Activated B cell treated with CpG ODN at 0.5 μM for 24 hours (primary cell): ENCODE measurements at regions of chr1 and their contacts with region 1.

Region 1: DNA sequence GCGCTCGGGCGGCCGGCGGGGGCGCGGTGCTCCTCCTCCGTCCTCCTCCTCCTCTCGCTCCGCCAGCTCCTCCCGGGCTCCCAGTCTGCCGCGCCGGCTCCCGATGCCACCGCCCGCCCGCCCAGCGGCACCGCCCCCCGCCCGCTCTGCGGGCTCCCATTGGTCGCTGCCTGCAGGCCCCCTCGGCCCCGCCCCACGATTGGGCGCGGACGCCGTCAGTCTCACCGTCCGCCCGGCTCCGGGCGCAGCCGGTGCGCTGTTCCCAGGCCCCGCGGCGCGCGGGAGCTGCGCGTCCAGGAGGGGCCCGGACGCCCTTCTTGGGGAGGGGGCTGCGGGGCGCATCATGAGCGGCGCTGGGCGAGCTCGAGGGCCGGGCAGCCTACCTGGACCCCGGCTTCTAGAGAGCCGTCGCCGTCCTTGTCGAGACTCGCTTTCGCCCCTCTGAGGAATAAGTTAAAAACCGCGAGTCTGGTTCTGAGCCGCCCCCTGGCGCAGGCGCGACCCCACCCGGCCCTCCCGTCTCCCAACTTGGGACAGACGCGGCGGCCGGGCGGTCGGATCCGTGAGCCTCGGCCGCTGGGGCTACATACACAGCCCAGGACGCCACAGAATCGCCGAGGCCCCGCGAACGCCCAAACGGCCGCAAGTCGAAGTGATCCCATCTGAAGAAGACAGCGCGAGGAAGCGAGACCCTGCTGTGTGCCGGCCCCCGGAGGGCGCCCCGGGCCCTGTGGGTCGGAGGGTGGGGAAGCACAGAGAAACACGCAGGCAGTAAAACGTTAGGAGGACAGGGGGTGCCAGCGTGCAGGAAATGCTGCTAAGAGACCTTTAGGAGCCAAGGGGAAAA is at the start of gene SIPA1L2:
- DNase-seq: peak; percentile 84
- ATAC-seq: peak; percentile 98
- H3K4me3 Mint-ChIP-seq: peak within 1 kb of the TSS; percentile 83
- H3K27ac Mint-ChIP-seq: no peak within 1 kb of the TSS
- H3K4me1 Mint-ChIP-seq: peaks cover 10% of the 10 kb centered on the region
- H3K27me3 Mint-ChIP-seq: peaks cover 42% of the 10 kb centered on the region
- CTCF ChIP-seq: no peak
- total RNA-seq, gene SIPA1L2: 0.13 and 0.20 TPM in 2 replicates

Region 2: DNA sequence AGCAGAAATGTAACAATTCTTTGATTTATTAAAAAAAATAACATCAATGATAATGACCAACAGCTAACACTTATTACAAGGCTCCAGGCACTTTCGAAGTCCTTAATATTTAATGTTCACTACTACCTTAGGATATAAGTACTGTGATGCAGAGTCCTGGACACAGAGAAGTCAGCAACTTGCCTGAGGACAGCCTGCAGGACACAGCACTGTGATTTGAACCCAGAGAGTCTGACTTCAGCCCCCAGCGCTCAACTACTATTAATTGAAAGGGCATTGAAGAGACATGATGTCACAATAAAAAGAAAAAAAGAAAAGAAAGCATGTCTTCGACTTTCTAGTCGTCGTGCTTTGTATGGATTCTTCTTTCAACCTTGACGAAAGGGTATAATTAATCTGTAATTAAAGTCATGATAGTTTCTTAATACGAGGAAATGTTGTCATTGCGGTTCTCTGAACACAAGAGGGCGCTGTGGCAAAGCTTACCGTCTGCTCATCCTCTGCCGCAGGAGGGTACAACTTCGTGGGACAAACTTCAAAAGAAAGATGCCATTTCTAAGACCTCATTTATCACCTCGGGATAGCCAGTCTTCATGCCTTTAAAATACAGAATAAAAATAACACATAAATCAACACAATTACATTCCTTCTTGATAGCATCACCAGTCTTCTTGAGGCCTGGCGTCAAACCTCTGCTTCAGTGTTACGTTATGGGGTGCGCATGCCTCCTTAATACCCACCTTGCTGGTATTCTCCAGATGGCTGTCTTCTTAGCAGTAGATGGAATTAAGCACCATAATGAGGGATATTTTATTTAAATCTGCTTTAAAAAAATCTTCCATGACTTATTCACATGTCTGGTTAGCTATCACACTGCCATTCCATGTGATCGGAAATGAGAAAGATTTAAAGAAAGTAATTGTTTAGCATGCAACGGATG is 763.6 kb before region 1 on chr1:
- CTCF ChIA-PET with region 1: no interaction called
- POLR2A ChIA-PET with region 1: no interaction called
- intact Hi-C with region 1: loop called (anchors 5 kb)
- DNase-seq: no peak
- ATAC-seq: no peak
- H3K4me3 Mint-ChIP-seq: no peak overlapping the region
- H3K27ac Mint-ChIP-seq: no peak overlapping the region
- H3K4me1 Mint-ChIP-seq: peaks cover 20% of the 10 kb centered on the region
- H3K27me3 Mint-ChIP-seq: no peaks in the 10 kb centered on the region
- CTCF ChIP-seq: peak; percentile 55

Region 3: DNA sequence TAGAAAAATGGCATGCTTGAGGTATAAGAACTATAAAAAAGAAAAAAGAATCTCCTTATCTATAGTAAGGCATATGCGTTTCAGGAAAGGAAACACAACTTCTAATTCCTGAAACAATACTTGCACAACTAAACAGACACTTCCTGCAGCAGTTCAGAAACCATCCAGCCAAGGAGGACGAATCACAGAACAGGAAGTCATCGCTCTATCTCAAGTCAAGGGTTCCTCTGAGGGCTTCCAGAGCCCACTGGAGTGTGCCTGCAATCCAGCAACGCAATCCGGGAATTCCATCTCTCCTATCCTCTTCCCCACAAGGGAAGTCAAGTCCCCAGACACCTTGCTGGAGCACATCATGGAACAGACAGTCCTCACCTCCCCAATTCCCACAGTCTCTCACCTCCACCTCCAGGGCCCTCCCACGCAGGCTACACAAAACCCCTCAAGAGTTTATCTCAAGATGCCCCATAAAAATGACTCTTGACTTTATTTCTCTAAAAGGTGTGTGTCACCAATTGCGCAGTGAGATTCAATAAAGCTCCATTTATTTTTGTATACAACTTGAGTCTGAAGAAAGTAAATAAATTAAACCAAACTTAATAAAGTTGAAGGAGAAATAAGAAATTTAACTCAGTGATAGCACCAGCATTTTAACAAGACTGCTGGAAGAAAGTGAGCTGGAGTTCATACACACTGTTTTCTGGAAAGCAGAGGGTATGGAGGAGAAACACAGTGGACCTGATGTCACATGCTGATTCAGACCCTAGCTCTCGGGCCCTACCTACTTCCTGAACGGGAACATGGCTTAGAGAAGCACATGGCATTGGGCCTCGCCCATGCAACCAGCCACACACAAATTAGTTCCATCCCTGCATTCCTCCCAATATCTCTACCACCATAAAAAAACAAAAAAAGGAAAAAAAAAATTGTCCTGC is 40.2 kb before region 1 on chr1:
- CTCF ChIA-PET with region 1: no interaction called
- POLR2A ChIA-PET with region 1: no interaction called
- intact Hi-C with region 1: loop called (anchors 2 kb)
- DNase-seq: no peak
- ATAC-seq: no peak
- H3K4me3 Mint-ChIP-seq: peak overlapping the region; percentile 5
- H3K27ac Mint-ChIP-seq: peak overlapping the region; percentile 36
- H3K4me1 Mint-ChIP-seq: peaks cover 20% of the 10 kb centered on the region
- H3K27me3 Mint-ChIP-seq: no peaks in the 10 kb centered on the region
- CTCF ChIP-seq: no peak

Region 4: DNA sequence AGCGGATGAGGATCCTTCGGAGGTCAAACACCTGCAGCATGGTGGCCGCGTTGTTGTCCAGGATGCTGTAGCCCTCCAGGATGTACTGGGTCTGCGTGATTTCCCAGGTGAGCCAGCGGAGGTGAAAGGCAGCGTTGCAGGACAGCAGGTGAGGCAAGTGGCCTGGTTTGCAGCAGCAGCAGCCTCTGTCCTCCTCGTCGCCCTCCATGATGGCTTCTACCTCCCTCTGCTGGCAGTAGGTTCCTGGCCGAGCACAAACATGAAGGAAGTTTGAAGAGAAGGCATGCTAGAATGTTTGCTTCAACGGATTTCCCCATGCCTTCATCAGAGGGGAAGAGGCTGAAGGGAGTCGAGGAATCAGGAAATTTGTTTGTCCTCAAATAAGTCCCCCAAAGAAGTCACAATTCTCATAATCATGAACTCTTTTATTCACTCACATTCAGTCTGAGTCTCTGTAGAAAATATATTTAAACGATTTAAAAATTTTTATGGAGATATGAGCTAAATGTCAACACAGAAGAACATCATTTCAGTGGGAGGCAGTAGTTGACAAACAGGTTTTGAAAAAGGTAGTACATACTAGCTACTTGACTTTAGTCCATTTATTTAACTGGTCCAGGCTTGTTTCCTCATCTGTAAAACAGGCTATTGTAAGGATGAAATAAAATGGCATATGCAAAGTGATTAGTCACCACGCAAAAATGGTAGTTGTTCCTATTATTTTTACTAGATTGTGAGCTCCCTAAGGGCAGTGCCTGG is 395.1 kb after region 1 on chr1:
- CTCF ChIA-PET with region 1: no interaction called
- POLR2A ChIA-PET with region 1: no interaction called
- intact Hi-C with region 1: loop called (anchors 10 kb)
- DNase-seq: no peak
- ATAC-seq: no peak
- H3K4me3 Mint-ChIP-seq: no peak overlapping the region
- H3K27ac Mint-ChIP-seq: no peak overlapping the region
- H3K4me1 Mint-ChIP-seq: no peaks in the 10 kb centered on the region
- H3K27me3 Mint-ChIP-seq: no peaks in the 10 kb centered on the region
- CTCF ChIP-seq: no peak